CD14-positive monocyte (primary cell): ENCODE measurements at regions of chr19 and their contacts with region 1.

Region 1: GRCh38 chr19:19821366-19821951 is at the start of gene ZNF506:
- DNase-seq: peak; percentile 90 to 93 (median 91)
- H3K4me3 ChIP-seq: peak within 1 kb of the TSS; percentile 61 to 87 (median 71)
- H3K4me3 Mint-ChIP-seq: peak within 1 kb of the TSS; percentile 99
- H3K27ac ChIP-seq: peak within 1 kb of the TSS; percentile 86 to 92
- H3K27ac Mint-ChIP-seq: peak within 1 kb of the TSS; percentile 95 to 99 (median 98)
- H3K4me1 ChIP-seq: peaks cover 0 to 8% of the 10 kb centered on the region in 2 donors
- H3K4me1 Mint-ChIP-seq: peaks cover 9% of the 10 kb centered on the region
- H3K27me3 ChIP-seq: no peaks in the 10 kb centered on the region
- H3K27me3 Mint-ChIP-seq: peaks cover 0 to 1% (median 0%) of the 10 kb centered on the region in 3 donors
- CTCF ChIP-seq: no peak
- polyA plus RNA-seq, gene ZNF506: 4.1 to 8.3 (median 6.1) TPM

Region 2: GRCh38 chr19:19663256-19664038 is 158.0 kb before region 1 on chr19 and contains the start of gene ATP13A1:
- intact Hi-C with region 1: loop called in 1 of 2 experiments (anchors 5 kb)
- DNase-seq: peak; percentile 96 to 99 (median 97)
- H3K4me3 ChIP-seq: peak within 1 kb of the TSS; percentile 80 to 95 (median 93)
- H3K4me3 Mint-ChIP-seq: peak within 1 kb of the TSS; percentile 90 to 94
- H3K27ac ChIP-seq: peak within 1 kb of the TSS; percentile 96 to 99
- H3K27ac Mint-ChIP-seq: peak within 1 kb of the TSS; percentile 95 to 99 (median 98)
- H3K4me1 ChIP-seq: peaks cover 28 to 41% of the 10 kb centered on the region in 2 donors
- H3K4me1 Mint-ChIP-seq: peaks cover 32% of the 10 kb centered on the region
- H3K27me3 ChIP-seq: no peaks in the 10 kb centered on the region
- H3K27me3 Mint-ChIP-seq: peaks cover 0 to 4% (median 2%) of the 10 kb centered on the region in 3 donors
- CTCF ChIP-seq: peak; percentile 14
- polyA plus RNA-seq, gene ATP13A1: 16.9 to 106 (median 21.9) TPM

Region 3: GRCh38 chr19:19711934-19712828 is 109.3 kb before region 1 on chr19:
- intact Hi-C with region 1: no loop called
- DNase-seq: no peak
- H3K4me3 ChIP-seq: peak overlapping the region in 1 of 3 experiments; percentile 54
- H3K4me3 Mint-ChIP-seq: no peak overlapping the region
- H3K27ac ChIP-seq: no peak overlapping the region
- H3K27ac Mint-ChIP-seq: no peak overlapping the region
- H3K4me1 ChIP-seq: no peaks in the 10 kb centered on the region
- H3K4me1 Mint-ChIP-seq: no peaks in the 10 kb centered on the region
- H3K27me3 ChIP-seq: no peaks in the 10 kb centered on the region
- H3K27me3 Mint-ChIP-seq: no peaks in the 10 kb centered on the region
- CTCF ChIP-seq: no peak

Region 4: DNA sequence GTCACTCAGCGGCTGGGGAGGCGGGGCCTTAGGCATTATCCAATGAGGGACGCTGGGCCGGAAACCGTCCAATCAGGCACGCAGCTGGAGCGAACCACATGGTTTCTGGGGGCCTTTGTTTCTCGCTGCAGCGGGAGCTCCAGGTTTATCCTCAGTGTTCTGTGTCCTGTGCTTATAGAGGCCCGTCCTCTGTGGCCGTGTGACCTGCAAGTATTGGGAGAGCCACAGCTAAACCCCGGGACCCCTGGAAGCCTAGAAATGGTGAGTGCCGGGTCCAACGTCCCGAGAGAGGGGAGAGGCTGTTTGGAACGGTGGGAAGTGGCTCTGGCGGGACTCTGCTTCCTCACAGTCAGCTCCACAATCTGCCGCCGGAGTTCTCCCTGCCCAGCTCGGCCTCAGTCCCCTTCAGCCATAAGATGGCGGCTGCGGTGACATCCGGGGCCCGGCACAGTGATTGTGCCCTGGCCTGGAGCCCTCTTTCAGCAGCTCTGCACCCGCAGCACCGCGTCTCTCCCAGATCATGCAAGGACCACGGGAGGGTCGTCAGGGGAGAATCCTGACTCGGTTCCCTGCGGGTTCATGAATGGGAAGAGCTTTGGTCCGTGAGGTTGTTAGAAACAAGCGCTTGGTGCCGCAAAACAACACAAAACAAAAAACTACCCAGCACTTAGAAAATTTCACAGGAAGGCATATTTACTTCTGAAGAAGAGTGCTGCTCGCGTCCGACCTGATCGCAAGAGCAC is 44.5 kb after region 1 on chr19 and contains the start of gene ZNF253:
- intact Hi-C with region 1: loop called in 1 of 2 experiments (anchors 5 kb)
- DNase-seq: peak; percentile 79 to 82 (median 80)
- H3K4me3 ChIP-seq: peak within 1 kb of the TSS; percentile 63 to 94 (median 73)
- H3K4me3 Mint-ChIP-seq: peak within 1 kb of the TSS; percentile 99
- H3K27ac ChIP-seq: peak within 1 kb of the TSS; percentile 87 to 95
- H3K27ac Mint-ChIP-seq: peak within 1 kb of the TSS; percentile 91 to 98 (median 96)
- H3K4me1 ChIP-seq: peaks cover 10% of the 10 kb centered on the region in 2 donors
- H3K4me1 Mint-ChIP-seq: peaks cover 25% of the 10 kb centered on the region
- H3K27me3 ChIP-seq: no peaks in the 10 kb centered on the region
- H3K27me3 Mint-ChIP-seq: peaks cover under 1 to 2% (median under 1%) of the 10 kb centered on the region in 3 donors
- CTCF ChIP-seq: no peak
- polyA plus RNA-seq, gene ZNF253: 0.45 to 1.5 (median 1.1) TPM

Region 5: DNA sequence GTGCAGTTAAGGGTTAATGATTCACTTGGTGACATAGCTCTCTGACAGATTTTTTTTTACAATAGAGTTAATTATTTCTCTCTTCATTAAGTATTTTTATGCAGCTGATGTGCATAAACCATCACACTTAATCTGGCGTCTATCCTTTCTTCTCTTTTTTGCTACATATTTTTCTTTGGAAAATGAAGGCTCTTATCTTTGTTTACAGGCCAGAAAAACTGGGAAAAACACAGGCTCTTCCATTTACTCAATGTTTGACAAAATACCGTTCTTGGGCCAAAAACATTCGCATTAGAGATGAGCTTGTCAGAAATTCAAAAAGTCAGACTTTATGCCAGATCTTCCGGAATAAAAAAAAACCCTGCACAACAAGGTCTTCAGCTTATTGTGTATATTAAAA is 56.3 kb after region 1 on chr19:
- intact Hi-C with region 1: no loop called
- DNase-seq: no peak
- H3K4me3 ChIP-seq: no peak overlapping the region
- H3K4me3 Mint-ChIP-seq: no peak overlapping the region
- H3K27ac ChIP-seq: no peak overlapping the region
- H3K27ac Mint-ChIP-seq: no peak overlapping the region
- H3K4me1 ChIP-seq: no peaks in the 10 kb centered on the region
- H3K4me1 Mint-ChIP-seq: no peaks in the 10 kb centered on the region
- H3K27me3 ChIP-seq: no peaks in the 10 kb centered on the region
- H3K27me3 Mint-ChIP-seq: no peaks in the 10 kb centered on the region
- CTCF ChIP-seq: no peak